Head of caudate nucleus (tissue), 42 donors: ENCODE measurements at regions of chr3 and their contacts with region 1.

Region 1: GRCh38 chr3:14651440-14652251 is at the start of gene CCDC174:
- DNase-seq: peak; percentile 85 to 99 (median 96)

Region 2: DNA sequence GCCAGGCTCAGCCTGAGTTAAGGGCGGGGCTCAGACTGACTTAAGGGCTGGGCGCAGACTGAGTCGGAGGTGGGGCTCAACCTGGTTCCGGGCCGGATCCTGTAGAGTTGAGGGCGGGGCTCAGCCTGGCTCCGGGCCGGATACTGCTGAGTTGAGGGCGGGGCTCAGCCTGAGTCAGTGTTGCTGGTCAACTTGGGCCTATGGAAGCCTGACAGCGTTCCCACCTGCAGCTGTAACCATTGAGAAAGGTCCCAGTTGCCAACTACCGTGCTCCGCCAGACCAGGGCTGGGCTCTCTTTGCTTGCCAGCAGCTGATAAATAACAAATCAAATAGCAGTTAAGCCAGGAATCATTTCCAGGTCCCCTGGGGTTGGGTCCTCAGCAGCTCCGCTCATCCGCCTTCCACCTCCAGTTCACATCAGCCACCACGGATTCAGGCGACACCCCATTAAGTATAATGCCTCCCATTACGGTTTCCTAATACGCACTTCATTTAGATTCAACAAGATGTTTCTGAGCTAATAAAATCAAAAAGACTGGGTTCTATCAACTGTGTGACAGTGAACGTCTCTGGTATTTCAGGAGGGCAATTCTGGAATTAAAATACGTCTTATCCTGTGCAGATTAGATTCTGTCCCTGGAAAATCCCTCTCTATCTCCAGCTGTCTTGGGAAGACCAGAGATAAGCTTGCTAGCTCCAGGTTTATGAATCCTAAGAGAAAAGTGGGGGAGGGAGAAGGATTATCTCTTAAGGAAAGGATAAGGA is 118.8 kb before region 1 on chr3:
- intact Hi-C with region 1: no loop called
- DNase-seq: no peak

Region 3: DNA sequence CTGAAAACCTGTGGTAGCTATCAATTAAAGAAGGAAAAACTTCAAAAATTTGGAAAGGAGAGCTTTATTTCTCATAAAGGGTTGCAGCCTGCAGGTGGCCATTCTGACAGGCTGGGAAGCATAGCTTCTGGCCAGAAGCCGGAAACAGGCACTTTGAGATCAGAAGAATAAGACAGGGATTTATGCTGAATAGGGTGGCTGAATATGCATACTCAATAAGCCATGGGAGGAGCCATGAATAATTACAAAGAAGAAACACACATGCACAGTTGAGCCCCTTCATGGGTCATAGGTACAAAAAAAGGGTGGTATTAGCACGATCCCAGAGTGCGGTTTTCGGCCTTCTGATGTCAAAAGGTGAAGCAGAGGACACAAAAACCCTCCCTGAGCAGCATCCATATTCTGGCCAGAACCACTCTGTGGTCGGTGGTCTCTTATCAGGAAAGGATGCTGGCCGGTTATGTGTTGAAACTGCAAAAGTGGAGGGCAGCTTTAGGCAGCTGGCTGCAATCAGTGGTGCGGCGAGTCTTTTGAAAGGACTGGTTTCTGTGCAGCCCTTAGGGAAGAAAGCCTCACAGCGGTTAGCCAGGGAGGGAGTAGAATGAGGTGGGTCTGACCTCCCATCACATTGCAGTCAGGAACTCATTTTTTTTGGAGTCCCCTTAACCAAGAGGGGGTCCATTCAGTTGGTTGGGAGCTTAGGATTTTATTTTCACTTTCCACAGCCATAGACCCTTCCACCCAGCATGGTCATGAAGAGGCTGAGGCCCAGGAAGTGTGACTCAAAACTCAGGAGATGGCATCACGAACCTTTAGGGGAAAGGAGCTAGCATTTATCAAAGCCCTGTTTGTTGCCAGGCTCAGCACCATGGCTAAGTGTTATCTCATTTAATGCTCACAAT is 34.8 kb before region 1 on chr3:
- intact Hi-C with region 1: no loop called
- DNase-seq: no peak

Region 4: GRCh38 chr3:14863333-14864100 is 211.9 kb after region 1 on chr3:
- intact Hi-C with region 1: no loop called
- DNase-seq: peak in 1 of 42 donors; percentile 9

Region 5: DNA sequence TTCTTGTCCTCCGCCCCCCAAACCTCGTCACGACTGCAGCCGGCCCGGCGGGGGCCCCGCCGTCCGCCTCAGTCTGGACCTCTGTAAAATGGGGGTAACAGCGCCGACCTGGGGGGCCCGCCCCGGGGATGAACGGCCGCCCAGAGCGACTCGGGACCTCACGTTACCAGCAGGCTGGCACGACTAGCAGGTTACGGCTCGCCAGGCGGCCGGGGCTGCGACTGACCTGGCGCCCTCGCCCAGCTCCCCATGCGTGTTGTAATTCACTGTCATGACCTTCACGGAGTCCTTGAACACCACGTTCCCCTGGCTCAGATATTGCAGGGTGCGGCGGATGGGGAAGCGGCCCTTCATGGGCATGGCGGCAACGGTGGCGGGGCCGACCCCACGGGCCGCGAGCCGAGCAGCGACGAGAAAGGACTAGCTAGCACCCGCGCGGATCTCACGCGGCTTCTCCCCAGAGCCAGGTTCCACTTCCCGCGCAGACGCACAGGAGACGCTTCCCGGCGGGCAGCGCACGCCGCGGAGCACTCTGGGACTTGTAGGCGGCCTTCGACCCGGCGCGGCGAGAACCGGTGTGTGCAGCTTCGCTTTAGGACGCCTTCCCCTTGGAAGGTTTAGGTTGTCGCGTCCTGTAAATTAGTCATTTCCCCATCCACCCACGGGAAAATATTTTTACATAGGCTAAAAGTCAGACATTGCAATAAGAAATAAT is 413.3 kb after region 1 on chr3 and contains the start of gene MRPS25:
- intact Hi-C with region 1: loop called (anchors 10 kb)
- DNase-seq: peak; percentile 71 to 95 (median 90)